Left ventricle myocardium inferior (tissue), 1 donor: ENCODE measurements at regions of chr14 and their contacts with region 1.

Region 1: DNA sequence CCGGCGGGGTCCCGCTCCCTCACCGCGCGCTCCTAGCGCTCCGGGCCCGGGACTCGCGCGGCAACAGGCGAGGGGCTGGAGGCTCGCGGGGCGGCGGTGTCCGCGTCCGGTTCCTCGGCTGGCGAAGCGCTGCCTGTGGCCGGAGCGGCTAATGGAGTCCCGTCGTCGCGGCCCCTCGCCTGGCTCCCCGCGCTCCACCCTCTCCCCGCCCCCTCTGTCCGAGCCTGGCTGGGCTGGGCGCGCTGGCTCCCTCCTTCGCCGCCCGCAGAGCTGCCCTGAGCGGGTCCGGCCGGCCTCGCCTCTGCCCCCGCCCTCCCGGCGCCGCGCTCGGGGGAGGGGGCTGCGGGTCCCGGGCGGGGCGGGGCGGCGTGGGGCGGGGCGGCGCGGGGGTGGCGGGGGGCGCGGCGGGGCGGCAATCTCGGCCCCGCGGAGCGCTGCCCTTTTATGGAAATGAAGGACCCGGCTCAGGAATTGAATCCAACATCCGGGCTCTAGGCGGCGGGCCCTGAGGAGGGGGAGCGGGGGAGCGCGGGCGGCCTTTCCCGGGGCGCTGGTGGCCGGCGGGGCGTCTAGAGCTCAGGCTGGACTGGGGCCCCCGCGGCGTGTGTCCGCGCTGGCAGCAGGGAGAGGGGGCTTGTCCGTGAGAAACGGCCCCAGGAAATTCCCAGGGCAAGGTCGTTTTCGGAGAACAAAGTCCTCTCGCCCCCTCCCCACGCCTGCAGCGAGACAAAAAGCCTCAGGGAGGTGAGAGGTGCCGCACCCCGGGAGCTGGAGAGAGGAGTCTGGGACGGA is at the start of gene FERMT2:
- DNase-seq: peak; percentile 92
- H3K4me3 ChIP-seq: peak within 1 kb of the TSS; percentile 95
- H3K27ac ChIP-seq: peak within 1 kb of the TSS; percentile 100
- H3K4me1 ChIP-seq: peaks cover 60% of the 10 kb centered on the region
- H3K27me3 ChIP-seq: no peaks in the 10 kb centered on the region
- CTCF ChIP-seq: no peak
- total RNA-seq, gene FERMT2: 91.9 TPM

Region 2: DNA sequence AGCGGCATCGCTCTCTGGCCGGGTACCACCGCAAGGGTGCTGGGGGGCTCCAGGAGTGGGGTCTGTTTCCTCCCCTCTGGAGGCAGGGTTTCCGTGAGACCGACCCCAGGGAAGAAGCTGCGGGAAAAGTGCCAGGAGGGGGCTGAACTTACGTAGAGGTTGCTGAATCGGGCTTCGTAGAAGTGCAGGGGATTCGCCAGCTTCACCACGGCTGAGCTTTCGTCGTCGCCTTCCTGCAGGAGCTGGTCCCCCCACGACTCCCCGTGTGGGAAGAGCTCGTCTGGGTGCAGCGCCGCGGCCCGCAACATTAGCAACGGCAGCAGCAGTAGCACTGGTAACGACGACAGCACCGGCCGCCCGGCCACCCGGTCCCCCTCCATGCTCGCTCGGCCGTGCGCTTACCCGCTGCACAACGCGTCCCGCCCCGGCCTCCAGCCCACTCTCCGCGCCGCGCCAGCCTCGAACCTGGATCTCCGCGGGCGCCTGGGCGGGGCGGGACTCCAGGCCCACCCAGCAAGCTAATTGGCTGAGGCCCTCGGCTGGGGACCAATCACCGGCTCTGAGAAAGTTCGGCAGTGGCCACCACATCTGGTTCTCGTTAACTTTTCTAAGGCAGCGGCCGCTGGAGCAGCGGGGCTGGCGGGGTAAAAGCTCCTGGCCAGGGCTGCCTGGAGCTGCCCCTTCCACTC is 882.3 kb before region 1 on chr14 and contains the start of gene NID2:
- intact Hi-C with region 1: no loop called
- DNase-seq: peak; percentile 91
- H3K4me3 ChIP-seq: peak within 1 kb of the TSS; percentile 84
- H3K27ac ChIP-seq: peak within 1 kb of the TSS; percentile 92
- H3K4me1 ChIP-seq: peaks cover 81% of the 10 kb centered on the region
- H3K27me3 ChIP-seq: no peaks in the 10 kb centered on the region
- CTCF ChIP-seq: no peak
- total RNA-seq, gene NID2: 35.2 TPM

Region 3: GRCh38 chr14:52220924-52221811 is 729.9 kb before region 1 on chr14:
- intact Hi-C with region 1: no loop called
- DNase-seq: no peak
- H3K4me3 ChIP-seq: peak overlapping the region; percentile 50
- H3K27ac ChIP-seq: peak overlapping the region; percentile 6
- H3K4me1 ChIP-seq: no peaks in the 10 kb centered on the region
- H3K27me3 ChIP-seq: no peaks in the 10 kb centered on the region
- CTCF ChIP-seq: no peak

Region 4: GRCh38 chr14:52619692-52620091 is 331.4 kb before region 1 on chr14:
- intact Hi-C with region 1: no loop called
- DNase-seq: no peak
- H3K4me3 ChIP-seq: no peak overlapping the region
- H3K27ac ChIP-seq: no peak overlapping the region
- H3K4me1 ChIP-seq: no peaks in the 10 kb centered on the region
- H3K27me3 ChIP-seq: no peaks in the 10 kb centered on the region
- CTCF ChIP-seq: no peak

Region 5: DNA sequence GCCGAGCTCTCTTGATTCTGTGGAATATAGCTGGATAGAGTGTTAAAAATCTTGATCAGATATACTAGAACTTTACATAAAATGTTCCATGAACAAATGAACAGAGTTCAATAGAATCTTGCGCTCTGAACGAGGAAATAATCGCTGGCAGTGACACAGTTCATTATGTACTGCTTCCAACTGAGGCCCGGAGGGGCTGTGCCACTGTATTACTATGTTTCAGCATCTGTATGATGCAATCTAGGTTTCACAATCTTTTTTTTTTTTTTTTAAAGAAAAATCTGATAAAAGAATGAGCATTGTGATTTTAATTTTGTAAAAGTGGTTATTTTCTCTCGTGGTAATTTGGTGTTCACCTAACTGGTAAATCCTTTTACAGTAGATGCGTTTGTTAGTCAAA is 77.4 kb before region 1 on chr14:
- intact Hi-C with region 1: no loop called
- DNase-seq: no peak
- H3K4me3 ChIP-seq: no peak overlapping the region
- H3K27ac ChIP-seq: no peak overlapping the region
- H3K4me1 ChIP-seq: peaks cover 25% of the 10 kb centered on the region
- H3K27me3 ChIP-seq: no peaks in the 10 kb centered on the region
- CTCF ChIP-seq: no peak

Region 6: DNA sequence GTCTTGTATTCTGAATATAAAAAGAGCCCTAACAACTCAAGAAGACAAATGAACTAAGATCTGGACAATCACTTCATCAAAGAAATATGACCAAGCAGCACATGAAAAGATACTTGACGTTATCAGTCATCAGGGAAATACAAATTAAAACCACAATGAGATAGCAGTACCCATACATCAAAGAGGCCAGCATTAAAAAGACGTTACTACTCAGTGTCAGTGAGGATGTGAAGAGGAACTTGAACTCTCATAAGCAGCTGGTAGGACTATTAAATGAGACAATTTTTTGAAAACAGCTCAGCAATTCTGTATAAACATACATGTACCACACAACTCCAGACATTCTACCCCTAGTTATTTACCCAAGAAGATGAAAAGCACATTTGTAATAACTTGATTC is 56.1 kb before region 1 on chr14:
- intact Hi-C with region 1: loop called (anchors 10 kb)
- DNase-seq: no peak
- H3K4me3 ChIP-seq: no peak overlapping the region
- H3K27ac ChIP-seq: no peak overlapping the region
- H3K4me1 ChIP-seq: peaks cover 44% of the 10 kb centered on the region
- H3K27me3 ChIP-seq: no peaks in the 10 kb centered on the region
- CTCF ChIP-seq: no peak

Region 7: GRCh38 chr14:53044486-53044885 is 93.4 kb after region 1 on chr14:
- intact Hi-C with region 1: loop called (anchors 10 kb)
- DNase-seq: no peak
- H3K4me3 ChIP-seq: no peak overlapping the region
- H3K27ac ChIP-seq: no peak overlapping the region
- H3K4me1 ChIP-seq: peaks cover 60% of the 10 kb centered on the region
- H3K27me3 ChIP-seq: no peaks in the 10 kb centered on the region
- CTCF ChIP-seq: no peak